GM10248 (cell line): ENCODE measurements at regions of chr10 and their contacts with region 1.

Region 1: GRCh38 chr10:68208424-68209042 is 23.4 kb downstream of the ATOH7 start:
- DNase-seq: peak; percentile 45
- CTCF ChIP-seq: peak; percentile 57

Region 2: GRCh38 chr10:68223535-68224165 is 15.1 kb after region 1 on chr10:
- CTCF ChIA-PET with region 1: interaction called, 49 read pairs
- POLR2A ChIA-PET with region 1: no interaction called
- DNase-seq: no peak
- CTCF ChIP-seq: no peak

Region 3: GRCh38 chr10:68231106-68231816 is 22.7 kb after region 1 on chr10:
- CTCF ChIA-PET with region 1: interaction called, 49 read pairs
- POLR2A ChIA-PET with region 1: no interaction called
- DNase-seq: peak; percentile 87
- CTCF ChIP-seq: no peak

Region 4: GRCh38 chr10:68301790-68302502 is 93.4 kb after region 1 on chr10:
- CTCF ChIA-PET with region 1: interaction called, 97 read pairs
- POLR2A ChIA-PET with region 1: no interaction called
- DNase-seq: peak; percentile 45
- CTCF ChIP-seq: peak; percentile 42

Region 5: GRCh38 chr10:68543004-68543918 is 334.7 kb after region 1 on chr10:
- CTCF ChIA-PET with region 1: no interaction called
- POLR2A ChIA-PET with region 1: no interaction called
- DNase-seq: no peak
- CTCF ChIP-seq: no peak